ENCODE measurements at regions of chr5 and their contacts with region 1.

Region 1: GRCh38 chr5:122602700-122603099 is 172.2 kb upstream of the SNX2 start:
- DNase-seq: no peak
- H3K4me3 ChIP-seq: no peak overlapping the region
- H3K27ac ChIP-seq: no peak overlapping the region
- H3K4me1 ChIP-seq: no peaks in the 10 kb centered on the region
- H3K27me3 ChIP-seq: no peaks in the 10 kb centered on the region
- CTCF ChIP-seq: no peak
- EP300 ChIP-seq: no peak
- POLR2A ChIP-seq: no peak

Region 2: DNA sequence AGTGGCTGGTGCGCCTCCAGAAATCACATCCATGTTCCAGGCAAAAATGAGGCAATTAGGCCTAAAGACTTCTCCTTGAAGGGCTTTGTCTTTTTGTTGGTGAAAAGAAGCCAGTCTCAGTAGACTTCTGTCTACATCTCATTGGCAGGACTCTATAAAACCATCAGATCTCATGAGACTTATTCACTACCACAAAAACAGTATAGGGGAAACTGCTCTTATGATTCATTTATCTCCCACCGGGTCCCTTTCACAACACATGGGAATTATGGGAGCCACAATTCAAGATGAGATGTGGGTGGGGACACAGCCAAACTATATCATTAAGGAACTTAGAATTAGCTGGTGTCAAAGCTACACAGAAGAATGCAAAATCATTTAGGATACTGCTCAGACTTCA is 94.5 kb after region 1 on chr5:
- intact Hi-C with region 1: loop called in 1 of 4 experiments (anchors 10 kb)
- DNase-seq: no peak
- H3K4me3 ChIP-seq: no peak overlapping the region
- H3K27ac ChIP-seq: no peak overlapping the region
- H3K4me1 ChIP-seq: no peaks in the 10 kb centered on the region
- H3K27me3 ChIP-seq: no peaks in the 10 kb centered on the region
- CTCF ChIP-seq: no peak
- EP300 ChIP-seq: no peak
- POLR2A ChIP-seq: no peak